Left colon (tissue), 2 donors: ENCODE measurements at regions of chr13 and their contacts with region 1.

Region 1: GRCh38 chr13:108974686-108975085 is 345.3 kb downstream of the MYO16 start:
- DNase-seq: no peak
- ATAC-seq: no peak

Region 2: GRCh38 chr13:108902557-108903155 is 72.0 kb before region 1 on chr13:
- intact Hi-C with region 1: no loop called
- DNase-seq: no peak
- ATAC-seq: no peak

Region 3: GRCh38 chr13:109131698-109132257 is 157.1 kb after region 1 on chr13:
- intact Hi-C with region 1: loop called in 1 of 2 experiments (anchors 10 kb)
- DNase-seq: peak in 1 of 2 donors; percentile 12
- ATAC-seq: no peak